ENCODE measurements at regions of chrX and their contacts with region 1.

Region 1: DNA sequence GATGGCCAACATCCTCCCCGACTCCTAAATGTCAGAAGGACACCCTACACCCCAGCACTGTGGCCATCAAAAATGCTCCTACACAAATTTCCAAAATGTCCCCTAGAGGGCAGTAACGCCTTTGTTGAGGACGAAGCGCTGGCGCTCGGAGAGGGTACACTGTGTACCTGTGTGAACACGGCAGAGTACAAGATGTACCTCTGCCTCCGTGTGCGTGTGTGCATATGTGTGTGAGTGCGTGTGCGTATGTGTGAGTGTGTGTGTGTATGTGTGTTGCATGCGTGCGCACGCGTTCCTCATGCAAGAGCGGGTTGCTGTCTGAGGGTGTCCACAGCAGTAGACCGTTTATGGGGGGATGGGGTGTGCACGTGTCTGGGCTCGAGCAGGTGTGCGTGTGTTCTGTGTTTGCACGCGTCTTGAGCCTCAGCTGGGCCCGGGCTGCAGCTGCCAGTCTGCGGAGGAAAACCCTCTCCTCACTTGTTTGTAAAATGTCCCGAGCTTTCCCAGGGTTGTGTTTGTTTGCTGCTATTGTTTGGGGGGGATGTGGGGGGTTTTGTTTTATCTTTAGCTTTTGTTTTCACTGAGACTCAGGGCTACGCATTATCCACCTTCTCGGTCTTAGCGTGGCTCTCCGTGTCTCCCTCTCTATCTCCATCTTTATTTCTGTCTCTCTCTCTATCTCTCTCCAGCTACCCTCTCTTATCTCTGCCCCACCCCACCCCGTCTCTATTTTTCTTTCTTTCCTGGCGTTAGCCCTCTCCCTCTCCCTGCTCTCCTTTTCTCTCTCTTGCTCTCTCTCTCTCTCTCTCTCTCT is 10.4 kb upstream of the TSPYL2 start:
- DNase-seq: peak; percentile 34 to 85 (median 77)
- ATAC-seq: peak; percentile 95
- H3K4me3 ChIP-seq: peak overlapping the region; percentile 75
- H3K4me3 Mint-ChIP-seq: peak overlapping the region; percentile 81 to 94 (median 90)
- H3K27ac ChIP-seq: peak overlapping the region; percentile 49
- H3K27ac Mint-ChIP-seq: peak overlapping the region; percentile 76 to 96 (median 91)
- H3K4me1 ChIP-seq: peaks cover 0 to 7% of the 10 kb centered on the region in 2 donors
- H3K4me1 Mint-ChIP-seq: peaks cover 6 to 19% (median 17%) of the 10 kb centered on the region in 7 donors
- H3K27me3 ChIP-seq: no peaks in the 10 kb centered on the region
- H3K27me3 Mint-ChIP-seq: no peaks in the 10 kb centered on the region

Region 2: GRCh38 chrX:53081925-53082772 is 10.3 kb after region 1 on chrX and contains the start of gene TSPYL2:
- CTCF ChIA-PET with region 1: interaction called, 3 read pairs
- POLR2A ChIA-PET with region 1: interaction called, 42 read pairs
- intact Hi-C with region 1: loop called (anchors 1 kb)
- DNase-seq: peak; percentile 83 to 96 (median 93)
- ATAC-seq: peak; percentile 91
- H3K4me3 ChIP-seq: peak within 1 kb of the TSS; percentile 64
- H3K4me3 Mint-ChIP-seq: peak within 1 kb of the TSS; percentile 87 to 98 (median 92)
- H3K27ac ChIP-seq: peak within 1 kb of the TSS; percentile 85
- H3K27ac Mint-ChIP-seq: peak within 1 kb of the TSS; percentile 96 to 99 (median 97)
- H3K4me1 ChIP-seq: peaks cover 0 to 12% of the 10 kb centered on the region in 2 donors
- H3K4me1 Mint-ChIP-seq: peaks cover 25 to 47% (median 38%) of the 10 kb centered on the region in 7 donors
- H3K27me3 ChIP-seq: no peaks in the 10 kb centered on the region
- H3K27me3 Mint-ChIP-seq: peaks cover 0 to 3% (median 0%) of the 10 kb centered on the region in 5 donors
- total RNA-seq, gene TSPYL2: 23.4 to 239 (median 166) TPM

Region 3: GRCh38 chrX:53088136-53088974 is 16.5 kb after region 1 on chrX:
- CTCF ChIA-PET with region 1: interaction called, 21 read pairs
- POLR2A ChIA-PET with region 1: interaction called, 42 read pairs
- intact Hi-C with region 1: loop called (anchors 1 kb)
- DNase-seq: peak; percentile 50 to 89 (median 80)
- ATAC-seq: peak; percentile 81
- H3K4me3 ChIP-seq: peak overlapping the region; percentile 53
- H3K4me3 Mint-ChIP-seq: peak overlapping the region; percentile 91 to 99 (median 94)
- H3K27ac ChIP-seq: peak overlapping the region; percentile 94
- H3K27ac Mint-ChIP-seq: peak overlapping the region; percentile 89 to 100 (median 99)
- H3K4me1 ChIP-seq: peaks cover 0 to 11% of the 10 kb centered on the region in 2 donors
- H3K4me1 Mint-ChIP-seq: peaks cover 25 to 58% (median 53%) of the 10 kb centered on the region in 7 donors
- H3K27me3 ChIP-seq: no peaks in the 10 kb centered on the region
- H3K27me3 Mint-ChIP-seq: no peaks in the 10 kb centered on the region

Region 4: GRCh38 chrX:53171356-53171755 is 99.5 kb after region 1 on chrX:
- CTCF ChIA-PET with region 1: no interaction called
- POLR2A ChIA-PET with region 1: no interaction called
- intact Hi-C with region 1: loop called in 1 of 2 experiments (anchors 2 kb)
- DNase-seq: no peak
- ATAC-seq: no peak
- H3K4me3 ChIP-seq: no peak overlapping the region
- H3K4me3 Mint-ChIP-seq: no peak overlapping the region
- H3K27ac ChIP-seq: no peak overlapping the region
- H3K27ac Mint-ChIP-seq: no peak overlapping the region
- H3K4me1 ChIP-seq: no peaks in the 10 kb centered on the region
- H3K4me1 Mint-ChIP-seq: no peaks in the 10 kb centered on the region
- H3K27me3 ChIP-seq: no peaks in the 10 kb centered on the region
- H3K27me3 Mint-ChIP-seq: no peaks in the 10 kb centered on the region